ENCODE measurements at regions of chr17 and their contacts with region 1.

Region 1: GRCh38 chr17:59106463-59107305 is at the start of gene TRIM37:
- DNase-seq: peak; percentile 99
- ATAC-seq: peak; percentile 95
- H3K4me3 Mint-ChIP-seq: peak within 1 kb of the TSS; percentile 85
- H3K27ac Mint-ChIP-seq: peak within 1 kb of the TSS; percentile 92
- H3K4me1 Mint-ChIP-seq: peaks cover 49% of the 10 kb centered on the region
- H3K27me3 Mint-ChIP-seq: no peaks in the 10 kb centered on the region
- total RNA-seq, gene TRIM37: 21.3 to 22.7 TPM

Region 2: DNA sequence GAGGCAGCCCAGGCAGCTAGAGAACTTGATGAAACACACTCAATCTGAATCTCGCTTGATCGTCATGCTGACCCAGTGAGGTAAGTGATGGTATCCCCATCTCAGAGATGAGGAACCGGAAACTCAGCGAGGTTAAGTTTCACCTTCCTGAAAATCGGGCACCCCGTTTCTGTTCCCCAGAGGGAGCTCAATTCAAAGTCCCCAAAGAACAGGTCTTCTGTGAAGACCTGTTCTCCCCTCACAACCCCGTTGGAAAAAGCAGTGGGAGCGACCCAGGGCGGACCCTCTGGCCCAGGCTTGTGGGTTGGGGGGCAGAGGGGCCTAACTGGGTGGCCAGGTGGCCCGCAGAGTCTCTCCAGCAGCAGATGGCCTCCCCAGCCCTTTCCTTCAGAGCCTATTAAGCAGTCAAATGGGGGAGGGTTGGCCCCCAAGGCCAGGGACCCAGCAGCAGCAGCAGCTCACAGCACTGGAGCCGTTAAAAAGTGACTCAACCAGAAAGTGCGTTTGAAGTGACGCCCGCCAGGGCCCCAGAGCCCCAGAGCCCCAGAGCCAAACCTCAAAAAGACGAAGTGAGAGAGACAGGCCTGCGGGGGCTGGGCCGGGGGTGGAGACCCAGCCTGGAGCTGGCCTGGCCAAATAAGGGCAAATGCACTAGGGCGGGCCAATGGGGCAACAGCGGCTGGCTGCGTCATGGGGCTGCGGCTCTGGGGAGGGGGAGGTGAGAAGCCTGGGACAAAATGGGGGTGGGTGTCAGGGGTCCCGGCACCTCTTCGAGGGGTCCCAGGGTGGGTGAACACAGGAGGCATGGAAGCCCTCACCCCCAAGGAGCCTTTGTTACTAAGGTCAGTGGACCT is 768.9 kb before region 1 on chr17:
- CTCF ChIA-PET with region 1: no interaction called
- POLR2A ChIA-PET with region 1: no interaction called
- intact Hi-C with region 1: loop called in 1 of 2 experiments (anchors 5 kb)
- DNase-seq: peak; percentile 97
- ATAC-seq: peak; percentile 57
- H3K4me3 Mint-ChIP-seq: peak overlapping the region; percentile 100
- H3K27ac Mint-ChIP-seq: peak overlapping the region; percentile 99
- H3K4me1 Mint-ChIP-seq: peaks cover 26% of the 10 kb centered on the region
- H3K27me3 Mint-ChIP-seq: no peaks in the 10 kb centered on the region

Region 3: GRCh38 chr17:58658804-58659713 is 447.6 kb before region 1 on chr17:
- CTCF ChIA-PET with region 1: no interaction called
- POLR2A ChIA-PET with region 1: interaction called, 11 read pairs
- intact Hi-C with region 1: no loop called
- DNase-seq: peak; percentile 84
- ATAC-seq: peak; percentile 91
- H3K4me3 Mint-ChIP-seq: peak overlapping the region; percentile 70
- H3K27ac Mint-ChIP-seq: peak overlapping the region; percentile 97
- H3K4me1 Mint-ChIP-seq: peaks cover 18% of the 10 kb centered on the region
- H3K27me3 Mint-ChIP-seq: peaks cover 3% of the 10 kb centered on the region

Region 4: DNA sequence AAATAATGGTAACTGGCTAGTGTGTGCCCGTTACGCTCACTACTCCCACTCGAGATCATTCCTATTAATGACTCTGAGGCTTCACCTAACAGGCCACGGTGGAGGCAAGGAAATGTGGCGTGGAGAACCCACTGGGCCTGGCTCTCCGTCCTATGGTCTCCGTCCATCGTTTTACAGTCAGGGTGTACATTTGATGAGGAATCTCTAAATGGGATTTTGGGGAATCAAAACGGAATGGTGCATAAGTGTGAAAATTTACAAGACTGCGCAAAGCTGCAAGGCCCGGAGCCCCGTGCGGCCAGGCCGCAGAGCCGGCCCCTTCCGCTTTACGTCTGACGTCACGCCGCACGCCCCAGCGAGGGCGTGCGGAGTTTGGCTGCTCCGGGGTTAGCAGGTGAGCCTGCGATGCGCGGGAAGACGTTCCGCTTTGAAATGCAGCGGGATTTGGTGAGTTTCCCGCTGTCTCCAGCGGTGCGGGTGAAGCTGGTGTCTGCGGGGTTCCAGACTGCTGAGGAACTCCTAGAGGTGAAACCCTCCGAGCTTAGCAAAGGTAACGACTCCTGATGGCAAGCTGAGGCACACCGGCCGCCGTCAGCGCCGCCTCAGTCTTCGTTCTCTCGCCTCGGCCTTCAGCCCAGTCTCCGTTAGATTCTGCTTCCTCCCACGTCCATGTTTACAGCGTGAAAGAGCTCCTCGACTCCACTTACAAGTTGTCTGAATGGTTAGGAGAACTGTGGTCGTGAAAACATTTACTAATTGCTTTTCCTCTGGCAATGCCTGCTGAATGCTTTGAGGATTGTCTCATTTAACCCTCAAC is 414.2 kb before region 1 on chr17 and contains the start of gene RAD51C:
- CTCF ChIA-PET with region 1: no interaction called
- POLR2A ChIA-PET with region 1: no interaction called
- intact Hi-C with region 1: loop called in 1 of 2 experiments (anchors 1 kb)
- DNase-seq: peak; percentile 94
- ATAC-seq: peak; percentile 96
- H3K4me3 Mint-ChIP-seq: peak within 1 kb of the TSS; percentile 92
- H3K27ac Mint-ChIP-seq: peak within 1 kb of the TSS; percentile 98
- H3K4me1 Mint-ChIP-seq: peaks cover 27% of the 10 kb centered on the region
- H3K27me3 Mint-ChIP-seq: no peaks in the 10 kb centered on the region
- total RNA-seq, gene RAD51C: 85.4 to 87.2 TPM

Region 5: GRCh38 chr17:59178266-59178978 is 71.7 kb after region 1 on chr17:
- CTCF ChIA-PET with region 1: no interaction called
- POLR2A ChIA-PET with region 1: no interaction called
- intact Hi-C with region 1: no loop called
- DNase-seq: no peak
- ATAC-seq: no peak
- H3K4me3 Mint-ChIP-seq: no peak overlapping the region
- H3K27ac Mint-ChIP-seq: no peak overlapping the region
- H3K4me1 Mint-ChIP-seq: no peaks in the 10 kb centered on the region
- H3K27me3 Mint-ChIP-seq: no peaks in the 10 kb centered on the region

Region 6: GRCh38 chr17:59220376-59221158 is 113.9 kb after region 1 on chr17 and contains the start of gene GDPD1:
- CTCF ChIA-PET with region 1: no interaction called
- POLR2A ChIA-PET with region 1: no interaction called
- intact Hi-C with region 1: loop called in 1 of 2 experiments (anchors 1 kb)
- DNase-seq: peak; percentile 99
- ATAC-seq: peak; percentile 99
- H3K4me3 Mint-ChIP-seq: peak within 1 kb of the TSS; percentile 93
- H3K27ac Mint-ChIP-seq: peak within 1 kb of the TSS; percentile 86
- H3K4me1 Mint-ChIP-seq: peaks cover 12% of the 10 kb centered on the region
- H3K27me3 Mint-ChIP-seq: no peaks in the 10 kb centered on the region
- total RNA-seq, gene GDPD1: 2.5 to 2.7 TPM

Region 7: GRCh38 chr17:59565171-59565969 is 458.7 kb after region 1 on chr17 and contains the start of gene DHX40:
- CTCF ChIA-PET with region 1: no interaction called
- POLR2A ChIA-PET with region 1: no interaction called
- intact Hi-C with region 1: loop called in 1 of 2 experiments (anchors 1 kb)
- DNase-seq: peak; percentile 98
- ATAC-seq: peak; percentile 89
- H3K4me3 Mint-ChIP-seq: peak within 1 kb of the TSS; percentile 99
- H3K27ac Mint-ChIP-seq: peak within 1 kb of the TSS; percentile 99
- H3K4me1 Mint-ChIP-seq: peaks cover 20% of the 10 kb centered on the region
- H3K27me3 Mint-ChIP-seq: no peaks in the 10 kb centered on the region
- total RNA-seq, gene DHX40: 22.9 to 24.1 TPM

Region 8: GRCh38 chr17:60077672-60078519 is 971.2 kb after region 1 on chr17:
- CTCF ChIA-PET with region 1: no interaction called
- POLR2A ChIA-PET with region 1: no interaction called
- intact Hi-C with region 1: loop called in 1 of 2 experiments (anchors 2 kb)
- DNase-seq: peak; percentile 81
- ATAC-seq: peak; percentile 73
- H3K4me3 Mint-ChIP-seq: peak overlapping the region; percentile 84
- H3K27ac Mint-ChIP-seq: peak overlapping the region; percentile 95
- H3K4me1 Mint-ChIP-seq: peaks cover 19% of the 10 kb centered on the region
- H3K27me3 Mint-ChIP-seq: no peaks in the 10 kb centered on the region